ENCODE measurements at regions of chr3 and their contacts with region 1.

Region 1: GRCh38 chr3:126212602-126213378 is 32.4 kb upstream of the ALDH1L1 start:
- DNase-seq: peak; percentile 72
- H3K4me3 ChIP-seq: peak overlapping the region; percentile 36 to 58 (median 50)
- H3K27ac ChIP-seq: peak overlapping the region; percentile 63 to 71 (median 67)
- H3K4me1 ChIP-seq: peaks cover 0 to 17% (median 12%) of the 10 kb centered on the region in 4 donors
- H3K27me3 ChIP-seq: peaks cover 0 to 9% (median 4%) of the 10 kb centered on the region in 3 donors
- CTCF ChIP-seq: peak in 3 of 4 experiments; percentile 14 to 55 (median 40)
- EP300 ChIP-seq: no peak
- POLR2A ChIP-seq: no peak

Region 2: GRCh38 chr3:125990253-125990970 is 222.4 kb before region 1 on chr3:
- intact Hi-C with region 1: loop called (anchors 10 kb)
- DNase-seq: peak; percentile 97
- H3K4me3 ChIP-seq: peak overlapping the region; percentile 51 to 73 (median 65)
- H3K27ac ChIP-seq: peak overlapping the region; percentile 78 to 91 (median 83)
- H3K4me1 ChIP-seq: peaks cover 0 to 16% (median 4%) of the 10 kb centered on the region in 4 donors
- H3K27me3 ChIP-seq: no peaks in the 10 kb centered on the region
- CTCF ChIP-seq: no peak
- EP300 ChIP-seq: no peak
- POLR2A ChIP-seq: no peak

Region 3: GRCh38 chr3:126134219-126134975 is 78.4 kb before region 1 on chr3:
- intact Hi-C with region 1: loop called (anchors 1 kb)
- DNase-seq: peak; percentile 87
- H3K4me3 ChIP-seq: no peak overlapping the region
- H3K27ac ChIP-seq: no peak overlapping the region
- H3K4me1 ChIP-seq: no peaks in the 10 kb centered on the region
- H3K27me3 ChIP-seq: no peaks in the 10 kb centered on the region
- CTCF ChIP-seq: peak; percentile 78 to 85 (median 82)
- EP300 ChIP-seq: no peak
- POLR2A ChIP-seq: no peak

Region 4: DNA sequence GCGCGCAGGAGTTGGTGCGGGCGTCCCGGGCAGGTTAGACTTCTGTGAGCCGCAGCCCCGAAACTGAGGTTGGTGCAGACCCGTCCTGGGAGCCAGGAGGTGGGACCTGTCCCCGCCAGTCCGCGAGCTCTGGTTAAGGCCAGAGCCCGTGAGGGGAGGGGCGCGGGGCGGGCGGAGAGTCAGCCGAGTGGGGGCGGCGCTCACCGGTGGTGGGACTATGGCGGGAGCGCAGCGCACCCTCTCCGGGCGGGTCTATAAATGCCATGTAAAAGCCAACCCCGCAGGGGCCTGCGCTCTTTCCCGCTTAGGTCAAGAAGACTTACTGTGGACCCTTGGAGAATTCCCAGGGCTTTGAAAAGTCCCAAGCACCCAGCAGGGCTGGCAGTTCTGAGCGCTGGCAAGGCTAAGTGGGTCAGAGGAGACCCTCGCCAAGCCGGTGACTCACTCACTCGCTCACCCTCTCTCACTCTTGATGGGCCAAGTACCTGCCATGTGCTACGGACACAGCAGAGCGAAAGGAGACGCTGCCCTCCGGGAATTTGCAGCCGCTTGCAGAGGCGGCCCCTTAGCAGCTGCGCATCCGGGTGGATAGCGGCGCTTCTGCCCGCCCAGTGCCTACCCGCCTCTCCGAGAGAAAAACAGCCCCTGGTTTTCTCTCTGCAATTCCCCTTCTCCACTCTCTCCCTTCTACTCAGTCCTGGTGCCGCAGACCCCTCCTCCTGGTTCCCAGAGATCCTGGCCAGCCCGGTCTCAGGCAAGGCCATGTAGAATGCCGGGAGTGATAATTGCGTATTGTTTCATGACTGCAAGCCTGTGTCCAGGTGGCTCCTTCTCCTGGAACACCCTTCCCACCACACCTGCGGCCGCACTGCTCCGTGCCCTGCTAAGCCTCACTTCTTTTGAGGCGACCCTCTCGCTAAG is 32.1 kb before region 1 on chr3 and contains the start of gene ALDH1L1:
- intact Hi-C with region 1: loop called (anchors 1 kb)
- DNase-seq: peak; percentile 97
- H3K4me3 ChIP-seq: peak within 1 kb of the TSS; percentile 56 to 78 (median 62)
- H3K27ac ChIP-seq: peak within 1 kb of the TSS; percentile 86 to 95 (median 90)
- H3K4me1 ChIP-seq: peaks cover 0 to 36% (median 30%) of the 10 kb centered on the region in 4 donors
- H3K27me3 ChIP-seq: no peaks in the 10 kb centered on the region
- CTCF ChIP-seq: no peak
- EP300 ChIP-seq: peak; percentile 40 to 80 (median 75)
- POLR2A ChIP-seq: peak; percentile 47 to 65
- total RNA-seq, gene ALDH1L1: 15.0 to 32.5 (median 27.6) TPM

Measured in sigmoid colon (tissue), 7 donors.